Posterior vena cava (tissue), 2 donors: ENCODE measurements at regions of chr9 and their contacts with region 1.

Region 1: GRCh38 chr9:437574-438001 is 222.9 kb downstream of the DOCK8 start:
- DNase-seq: no peak

Region 2: GRCh38 chr9:489198-490197 is 51.9 kb after region 1 on chr9:
- intact Hi-C with region 1: no loop called
- DNase-seq: no peak

Region 3: GRCh38 chr9:2060424-2060823 is 1622.8 kb after region 1 on chr9:
- intact Hi-C with region 1: loop called in 1 of 2 experiments (anchors 5 kb)
- DNase-seq: no peak